A549 (cell line): ENCODE measurements at regions of chr9 and their contacts with region 1.

Region 1: DNA sequence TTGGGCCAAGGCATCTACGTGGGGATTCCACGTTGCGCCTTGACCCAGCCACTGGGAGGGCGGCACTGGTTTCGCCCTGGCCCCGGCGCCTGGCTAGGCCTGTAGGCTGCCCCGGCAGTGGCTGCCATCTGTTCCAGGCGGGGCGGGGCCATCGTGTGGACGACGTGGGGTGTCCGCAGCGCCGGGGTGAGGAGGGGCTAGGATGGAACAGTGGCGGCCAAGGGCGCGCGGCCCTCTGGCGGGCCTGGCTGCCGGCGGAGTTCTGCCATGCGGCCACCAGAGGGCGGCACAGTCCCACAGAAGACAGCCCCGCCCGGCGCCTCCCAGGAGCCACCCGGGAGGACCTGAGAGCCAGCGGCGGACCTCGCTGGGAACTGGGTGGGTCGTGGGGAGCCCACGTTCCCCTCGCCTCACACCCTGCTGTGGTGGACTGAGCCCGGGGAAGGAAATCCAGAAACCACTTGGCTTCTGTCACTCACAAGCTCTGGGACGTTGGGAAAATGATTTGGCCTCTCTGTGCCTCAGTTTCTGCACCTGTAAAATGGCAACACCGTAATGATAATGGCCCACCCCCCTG is 22.6 kb upstream of the RAPGEF1 start:
- DNase-seq: peak; percentile 66 to 77
- ATAC-seq: peak; percentile 88 to 97
- H3K4me3 ChIP-seq: no peak overlapping the region
- H3K27ac ChIP-seq: no peak overlapping the region
- H3K4me1 ChIP-seq: peaks cover 9% of the 10 kb centered on the region; the same call in 1 of the 3 replicates
- CTCF ChIP-seq: peak; percentile 93
- EP300 ChIP-seq: no peak
- POLR2A ChIP-seq: no peak
- RAD21 ChIP-seq: peak; percentile 93 to 98

Region 2: GRCh38 chr9:131747356-131747755 is 15.1 kb before region 1 on chr9:
- CTCF ChIA-PET with region 1: interaction called, 12 read pairs
- POLR2A ChIA-PET with region 1: no interaction called
- DNase-seq: peak in 1 of 2 experiments; percentile 84
- ATAC-seq: peak; percentile 57 to 76
- H3K4me3 ChIP-seq: no peak overlapping the region
- H3K27ac ChIP-seq: no peak overlapping the region
- H3K4me1 ChIP-seq: no peaks in the 10 kb centered on the region
- CTCF ChIP-seq: peak; percentile 62
- EP300 ChIP-seq: no peak
- POLR2A ChIP-seq: no peak
- RAD21 ChIP-seq: peak; percentile 81 to 91

Region 3: GRCh38 chr9:131773911-131774379 is 11.5 kb after region 1 on chr9:
- CTCF ChIA-PET with region 1: interaction called, 16 read pairs
- POLR2A ChIA-PET with region 1: no interaction called
- DNase-seq: peak; percentile 48 to 51
- ATAC-seq: peak; percentile 62 to 75; a peak in 3 of 6 replicates
- H3K4me3 ChIP-seq: no peak overlapping the region
- H3K27ac ChIP-seq: no peak overlapping the region
- H3K4me1 ChIP-seq: no peaks in the 10 kb centered on the region
- CTCF ChIP-seq: no peak
- EP300 ChIP-seq: no peak
- POLR2A ChIP-seq: no peak
- RAD21 ChIP-seq: no peak

Region 4: DNA sequence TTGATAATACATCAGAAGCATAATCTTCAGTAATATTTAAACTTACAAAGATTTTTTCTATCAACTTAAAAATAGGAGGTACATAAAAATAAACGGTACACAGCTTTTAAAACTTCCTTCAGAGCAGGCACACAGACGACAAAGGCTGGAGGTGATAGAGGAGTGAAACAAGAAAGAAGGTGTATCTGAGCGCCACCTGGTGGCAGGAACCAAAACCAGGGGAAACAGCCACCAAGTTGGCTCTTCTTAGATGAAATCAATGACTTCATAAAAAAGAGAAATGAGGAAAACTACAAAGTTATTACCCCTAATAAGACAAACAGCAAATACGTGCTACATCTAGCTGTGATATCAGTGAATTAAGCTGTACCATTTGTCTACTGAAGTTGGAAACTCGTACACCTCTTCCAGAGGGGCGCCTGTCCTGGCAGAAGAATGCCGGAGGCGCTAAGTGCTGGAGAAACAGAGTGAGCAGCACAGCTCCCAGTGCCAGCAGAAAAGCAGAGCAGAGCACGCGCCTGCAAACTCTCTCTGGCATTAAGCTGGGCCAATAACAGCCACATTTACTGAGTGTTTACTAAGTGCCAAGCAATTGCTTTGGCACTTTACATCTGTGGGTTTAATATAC is 506.4 kb after region 1 on chr9:
- CTCF ChIA-PET with region 1: interaction called, 26 read pairs
- POLR2A ChIA-PET with region 1: no interaction called
- DNase-seq: peak; percentile 58 to 79
- ATAC-seq: peak; percentile 70 to 89; a peak in 5 of 6 replicates
- H3K4me3 ChIP-seq: no peak overlapping the region
- H3K27ac ChIP-seq: peak overlapping the region; percentile 87 to 89
- H3K4me1 ChIP-seq: peaks cover 32% of the 10 kb centered on the region
- CTCF ChIP-seq: peak; percentile 83
- EP300 ChIP-seq: no peak
- POLR2A ChIP-seq: no peak
- RAD21 ChIP-seq: peak; percentile 42 to 53